Motor neuron (in vitro differentiated cells): ENCODE measurements at regions of chr6 and their contacts with region 1.

Region 1: DNA sequence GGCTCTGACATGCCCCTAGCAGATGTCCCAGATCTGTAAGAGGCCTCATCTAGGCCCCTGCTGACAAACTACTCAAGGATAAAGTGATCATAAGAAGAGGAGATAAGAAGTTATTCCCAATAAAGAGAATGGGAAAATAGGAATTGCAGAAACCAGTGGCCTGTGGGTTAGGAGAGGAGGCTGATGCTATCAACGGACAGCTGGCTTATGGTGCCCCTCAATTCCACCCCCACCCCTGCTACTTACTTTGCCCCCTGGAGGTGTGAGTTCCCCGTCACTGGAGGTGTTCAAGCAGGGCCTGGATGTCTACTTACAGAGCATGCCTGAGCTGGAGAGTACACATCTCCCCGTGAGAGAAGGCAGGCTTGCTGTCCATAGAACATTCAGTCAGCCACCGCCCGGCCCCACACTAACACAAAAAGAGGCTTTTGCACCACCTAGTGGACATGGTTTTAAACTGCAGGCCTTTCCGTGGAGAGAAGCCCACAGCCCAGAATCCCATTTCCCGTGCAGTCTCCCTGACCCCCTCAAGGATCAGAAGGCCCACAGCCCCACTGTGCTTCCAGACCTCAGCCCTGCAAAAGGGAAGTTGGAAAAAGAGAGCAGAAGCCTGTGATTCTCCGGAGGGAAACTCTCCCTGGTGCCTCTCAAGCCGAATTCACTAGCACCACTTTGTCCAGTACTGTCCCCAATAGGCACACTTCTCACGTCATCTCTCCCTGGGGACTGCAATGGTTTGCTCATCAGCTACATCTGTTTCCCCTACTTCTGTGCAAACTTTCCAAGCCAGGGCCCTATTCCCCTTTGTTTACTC is 23.8 kb upstream of the BNIP5 start:
- ATAC-seq: peak; percentile 86 to 100 (median 99)
- H3K4me3 ChIP-seq: no peak overlapping the region
- H3K27ac ChIP-seq: no peak overlapping the region
- H3K4me1 ChIP-seq: peaks cover 0 to 8% of the 10 kb centered on the region in 2 donors

Region 2: DNA sequence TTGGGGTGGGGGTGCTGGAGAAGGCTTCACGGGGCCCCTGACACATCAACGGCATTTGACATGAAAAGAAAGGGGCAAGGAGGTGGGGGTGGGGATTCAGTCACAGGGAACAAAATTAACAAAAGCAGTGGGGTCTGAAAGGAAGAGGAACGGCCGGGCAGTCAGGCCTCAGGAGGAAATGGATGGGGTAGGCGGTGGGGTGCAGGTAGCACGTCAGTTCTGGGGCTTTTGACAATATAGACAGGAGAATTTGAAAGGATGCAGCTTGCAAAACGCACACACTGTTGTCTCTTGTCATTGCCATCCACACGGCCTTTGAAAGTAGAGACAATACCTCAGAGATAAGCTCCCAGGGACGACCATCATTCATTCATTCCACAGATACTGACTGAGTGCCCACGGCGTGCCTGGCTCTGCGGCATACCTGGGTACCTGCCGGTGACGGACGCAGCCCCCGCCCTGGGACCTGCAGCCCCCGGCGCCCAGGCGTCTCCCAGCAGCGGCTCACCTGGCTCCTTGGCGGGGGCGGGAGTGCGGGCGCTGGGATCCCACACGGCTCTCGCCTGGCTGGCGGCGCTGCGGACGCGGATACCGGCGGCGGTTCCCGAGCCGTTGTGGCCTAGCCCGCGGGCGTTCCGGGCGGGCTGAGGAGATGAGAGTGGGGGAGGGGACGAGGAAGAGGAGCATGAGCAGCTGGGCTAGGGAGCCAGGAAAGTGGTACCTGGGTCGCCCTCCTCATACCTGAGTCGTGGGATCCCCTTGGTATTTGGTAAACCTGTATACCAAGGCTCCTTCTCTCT is 336.3 kb before region 1 on chr6 and contains the start of gene SLC26A8:
- in situ Hi-C with region 1: no loop called
- ATAC-seq: no peak
- H3K4me3 ChIP-seq: no peak within 1 kb of the TSS
- H3K27ac ChIP-seq: no peak within 1 kb of the TSS
- H3K4me1 ChIP-seq: no peaks in the 10 kb centered on the region
- total RNA-seq, gene SLC26A8: 0.05 to 0.61 (median 0.22) TPM in 7 of 8 experiments, not detected in the other

Region 3: GRCh38 chr6:36123257-36124139 is 236.9 kb before region 1 on chr6:
- in situ Hi-C with region 1: loop called in 4 of 9 experiments (anchors 10 to 25 kb)
- ATAC-seq: peak; percentile 76 to 93 (median 77)
- H3K4me3 ChIP-seq: no peak overlapping the region
- H3K27ac ChIP-seq: no peak overlapping the region
- H3K4me1 ChIP-seq: peaks cover 0 to 3% of the 10 kb centered on the region in 2 donors

Region 4: DNA sequence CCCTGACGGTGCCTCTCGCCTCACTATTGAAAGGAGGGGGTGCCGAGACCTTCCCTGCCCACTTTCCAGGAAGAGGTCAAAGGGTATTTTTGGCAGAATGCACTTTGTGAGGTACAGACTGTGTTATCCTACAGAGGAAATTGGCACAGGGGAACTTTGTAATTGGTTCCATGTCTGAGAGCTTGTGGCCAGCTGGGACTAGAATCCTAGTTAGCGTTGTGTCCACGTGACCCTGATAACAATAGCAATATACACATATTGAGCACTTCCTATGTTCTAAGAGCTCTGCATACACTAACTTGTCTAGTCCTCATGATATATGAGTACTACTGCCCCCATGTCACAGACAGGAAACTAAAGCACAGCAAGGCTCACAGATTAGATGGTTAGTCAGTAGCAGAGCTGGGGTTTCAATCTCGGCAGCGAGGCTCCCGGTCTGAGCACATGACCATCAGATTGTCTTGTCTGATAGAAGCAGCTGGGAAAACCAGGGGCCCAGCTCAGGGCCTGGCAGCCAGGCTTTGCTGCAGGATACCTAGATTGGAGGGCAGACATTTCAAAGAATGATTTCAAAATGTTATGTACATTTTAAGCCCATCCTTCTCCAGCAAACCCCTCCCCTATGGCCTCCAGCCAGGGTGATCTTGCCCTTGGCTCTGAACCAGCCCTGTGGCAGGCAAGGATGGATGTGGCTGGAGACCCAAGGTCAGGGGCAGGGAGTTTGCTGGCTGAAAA is 228.8 kb before region 1 on chr6:
- in situ Hi-C with region 1: loop called in 4 of 9 experiments (anchors 10 to 25 kb)
- ATAC-seq: peak; percentile 32 to 91 (median 82)
- H3K4me3 ChIP-seq: no peak overlapping the region
- H3K27ac ChIP-seq: peak overlapping the region; percentile 27 to 35
- H3K4me1 ChIP-seq: peaks cover 35 to 38% of the 10 kb centered on the region in 2 donors